Activated CD4-positive, alpha-beta memory T cell treated with anti-CD3 and anti-CD28 coated beads, Interleukin-2, amount 10 ng/mL, durations not matched to agents 7 days and 5 days (primary cell): ENCODE measurements at regions of chr10 and their contacts with region 1.

Region 1: DNA sequence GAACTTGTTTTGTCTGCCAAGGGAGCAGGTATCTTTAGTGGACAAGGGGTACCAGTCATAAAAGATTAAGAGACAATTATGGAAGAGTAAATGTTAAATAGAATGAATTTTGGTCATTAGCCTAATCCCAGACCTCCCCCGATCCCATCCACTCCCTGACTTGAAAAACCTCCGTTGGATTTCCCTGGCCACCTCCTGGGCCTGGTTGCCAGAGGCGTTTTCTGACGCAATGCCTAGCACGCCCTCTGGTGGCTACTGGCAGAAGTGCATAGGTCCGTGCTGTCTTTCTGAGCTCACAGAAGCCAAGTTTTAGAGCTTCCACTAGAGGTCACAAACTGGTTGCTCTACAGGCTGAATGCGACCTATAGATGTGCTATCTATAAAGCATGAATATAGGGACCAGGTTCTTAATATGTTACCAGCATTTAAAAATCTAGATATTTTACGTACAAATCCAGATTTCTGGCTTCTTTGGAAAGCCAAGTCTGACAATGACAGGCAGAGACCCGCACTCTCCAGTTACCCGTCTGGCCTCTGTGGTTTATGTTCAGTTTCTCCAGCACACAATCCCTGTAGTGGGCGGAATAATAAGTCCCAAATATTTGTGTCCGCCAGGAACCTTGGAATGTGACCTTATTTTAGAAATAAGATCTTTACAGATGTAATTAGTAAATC is 39.8 kb downstream of the SPOCK2 start:
- DNase-seq: peak; percentile 93
- H3K4me3 Mint-ChIP-seq: no peak overlapping the region
- H3K27ac Mint-ChIP-seq: peak overlapping the region; percentile 8
- H3K4me1 Mint-ChIP-seq: peaks cover 8% of the 10 kb centered on the region
- H3K27me3 Mint-ChIP-seq: no peaks in the 10 kb centered on the region

Region 2: GRCh38 chr10:71708301-71708703 is 340.3 kb before region 1 on chr10:
- CTCF ChIA-PET with region 1: no interaction called
- POLR2A ChIA-PET with region 1: no interaction called
- DNase-seq: peak; percentile 73
- H3K4me3 Mint-ChIP-seq: no peak overlapping the region
- H3K27ac Mint-ChIP-seq: no peak overlapping the region
- H3K4me1 Mint-ChIP-seq: peaks cover 32% of the 10 kb centered on the region
- H3K27me3 Mint-ChIP-seq: no peaks in the 10 kb centered on the region

Region 3: DNA sequence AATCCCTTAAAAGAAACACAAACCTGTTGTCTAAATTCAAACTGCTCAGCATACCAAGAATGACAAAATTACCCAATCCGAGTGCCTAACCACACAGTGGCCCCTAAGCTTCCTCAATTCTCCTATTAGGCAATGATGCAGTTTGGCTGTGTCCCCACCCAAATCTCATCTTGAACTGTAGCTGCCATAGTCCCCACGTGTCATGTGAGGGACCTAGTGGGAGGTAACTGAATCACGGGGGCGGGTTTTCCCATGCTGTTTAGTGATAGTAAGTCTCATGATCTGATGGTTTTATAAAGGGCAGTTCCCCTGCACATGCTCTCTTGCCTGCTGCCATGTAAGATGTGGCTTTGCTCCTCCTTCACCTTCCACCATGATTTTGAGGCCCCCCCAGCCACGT is 219.4 kb before region 1 on chr10:
- CTCF ChIA-PET with region 1: no interaction called
- POLR2A ChIA-PET with region 1: no interaction called
- DNase-seq: no peak
- H3K4me3 Mint-ChIP-seq: no peak overlapping the region
- H3K27ac Mint-ChIP-seq: peak overlapping the region; percentile 8
- H3K4me1 Mint-ChIP-seq: peaks cover 9% of the 10 kb centered on the region
- H3K27me3 Mint-ChIP-seq: no peaks in the 10 kb centered on the region

Region 4: DNA sequence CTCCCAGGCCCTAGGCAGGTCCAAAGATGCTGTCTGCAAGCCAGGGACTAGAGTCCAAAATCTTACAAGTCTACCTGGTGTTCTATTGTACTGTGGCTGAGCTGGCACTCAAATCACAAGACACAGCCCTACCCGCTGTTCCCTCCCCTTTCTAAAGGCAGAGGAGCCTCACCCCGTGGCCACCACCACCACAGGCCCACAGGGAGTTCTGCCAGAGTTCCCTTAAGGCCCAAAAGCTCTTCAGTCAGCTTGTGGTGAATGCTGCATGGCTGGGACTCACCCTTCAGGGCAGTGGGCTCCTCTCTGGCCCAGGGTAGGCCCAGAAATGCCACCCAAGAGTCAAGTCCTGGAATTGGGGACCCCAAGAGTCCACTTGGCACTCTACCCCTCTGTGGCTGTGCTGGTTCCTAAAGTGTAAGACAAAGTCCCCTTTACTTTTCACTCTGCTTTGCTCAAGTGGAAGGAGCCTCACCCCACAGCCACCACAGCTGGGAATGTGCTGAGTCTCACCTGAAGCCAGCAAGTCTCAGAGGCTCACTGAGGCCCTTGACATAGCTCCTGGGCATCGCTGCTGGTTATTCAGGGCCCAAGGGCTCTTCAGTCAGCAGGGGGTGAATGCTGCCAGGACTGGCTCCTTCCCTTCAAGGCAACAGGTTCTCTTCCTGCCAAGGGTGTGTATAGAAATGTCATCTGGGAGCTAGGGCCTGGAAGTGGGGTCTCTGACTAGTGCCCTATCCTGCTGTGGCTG is 148.7 kb before region 1 on chr10:
- CTCF ChIA-PET with region 1: interaction called, 30 read pairs
- POLR2A ChIA-PET with region 1: interaction called, 5 read pairs
- DNase-seq: no peak
- H3K4me3 Mint-ChIP-seq: no peak overlapping the region
- H3K27ac Mint-ChIP-seq: no peak overlapping the region
- H3K4me1 Mint-ChIP-seq: peaks cover 3% of the 10 kb centered on the region
- H3K27me3 Mint-ChIP-seq: peaks cover 2% of the 10 kb centered on the region

Region 5: GRCh38 chr10:72038458-72039001 is 10.1 kb before region 1 on chr10:
- CTCF ChIA-PET with region 1: interaction called, 25 read pairs
- POLR2A ChIA-PET with region 1: no interaction called
- DNase-seq: no peak
- H3K4me3 Mint-ChIP-seq: no peak overlapping the region
- H3K27ac Mint-ChIP-seq: no peak overlapping the region
- H3K4me1 Mint-ChIP-seq: no peaks in the 10 kb centered on the region
- H3K27me3 Mint-ChIP-seq: peaks cover 1% of the 10 kb centered on the region

Region 6: DNA sequence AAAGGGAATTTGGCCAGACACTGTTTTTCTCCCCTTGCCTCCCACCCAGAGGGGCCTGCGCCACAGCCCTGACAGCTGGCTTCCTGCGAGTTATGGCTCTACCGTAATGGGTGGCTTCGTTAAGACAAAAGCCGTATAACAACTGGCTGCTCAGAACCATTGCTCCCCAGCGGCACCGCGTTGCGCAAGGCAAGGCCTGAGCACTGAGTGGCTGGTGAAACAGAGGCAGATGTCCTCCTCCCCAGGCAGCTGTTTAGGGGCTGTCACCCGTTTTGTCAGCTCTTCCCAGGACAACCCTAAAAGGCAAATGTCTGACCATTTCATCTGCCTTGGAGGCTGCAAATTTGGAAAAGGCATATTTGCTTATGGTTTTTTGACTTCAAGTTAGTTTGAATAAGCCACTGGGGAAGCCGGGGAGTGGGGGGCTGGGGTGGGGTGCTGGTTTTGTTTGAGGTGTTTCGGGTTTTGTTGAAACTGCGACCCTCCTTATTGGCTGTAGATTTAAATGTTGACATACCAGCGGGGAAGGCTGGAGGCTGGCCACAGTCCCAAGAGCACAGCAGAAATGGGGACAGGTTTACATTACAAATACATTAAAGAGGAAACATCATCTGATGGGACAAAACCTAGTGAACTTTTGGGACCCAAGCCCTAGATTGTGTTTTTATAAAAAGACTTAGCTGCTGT is 40.4 kb after region 1 on chr10:
- CTCF ChIA-PET with region 1: interaction called, 13 read pairs
- POLR2A ChIA-PET with region 1: interaction called, 4 read pairs
- DNase-seq: peak; percentile 68
- H3K4me3 Mint-ChIP-seq: peak overlapping the region; percentile 100
- H3K27ac Mint-ChIP-seq: peak overlapping the region; percentile 100
- H3K4me1 Mint-ChIP-seq: peaks cover 54% of the 10 kb centered on the region
- H3K27me3 Mint-ChIP-seq: no peaks in the 10 kb centered on the region

Region 7: DNA sequence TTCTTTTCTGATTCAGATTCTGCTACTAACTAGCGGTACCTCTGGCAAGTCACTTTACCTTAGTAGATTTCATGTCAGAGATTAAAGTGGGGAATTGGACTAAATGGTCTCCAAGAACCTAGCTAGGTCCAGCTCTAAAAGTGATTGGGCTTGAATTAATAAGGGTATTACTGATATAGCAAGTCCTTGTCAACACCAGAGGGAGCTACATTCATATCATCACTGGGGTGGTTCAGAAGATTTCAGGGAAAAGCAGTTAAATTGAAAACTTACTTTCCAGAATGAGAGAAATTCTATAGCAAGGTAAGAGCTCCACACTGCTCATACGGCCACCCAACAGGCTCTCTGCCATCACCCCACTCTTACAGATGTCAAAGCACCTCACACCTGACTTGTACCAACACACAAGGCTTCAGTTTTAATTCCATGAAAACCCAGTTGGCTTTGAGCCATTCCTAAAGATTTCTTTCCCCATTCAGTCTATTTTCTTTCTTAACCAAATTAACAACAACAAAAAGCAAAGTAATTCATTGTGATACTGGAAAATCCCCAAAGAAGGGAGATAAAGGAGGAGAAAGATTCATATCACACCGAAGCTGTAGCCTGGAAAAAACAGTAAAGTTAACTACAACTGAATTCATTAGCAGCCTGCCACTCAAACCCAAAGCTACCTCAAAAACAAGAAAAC is 77.7 kb after region 1 on chr10:
- CTCF ChIA-PET with region 1: interaction called, 20 read pairs
- POLR2A ChIA-PET with region 1: no interaction called
- DNase-seq: no peak
- H3K4me3 Mint-ChIP-seq: no peak overlapping the region
- H3K27ac Mint-ChIP-seq: no peak overlapping the region
- H3K4me1 Mint-ChIP-seq: peaks cover 28% of the 10 kb centered on the region
- H3K27me3 Mint-ChIP-seq: no peaks in the 10 kb centered on the region

Region 8: GRCh38 chr10:72223743-72224101 is 175.1 kb after region 1 on chr10:
- CTCF ChIA-PET with region 1: interaction called, 29 read pairs
- POLR2A ChIA-PET with region 1: no interaction called
- DNase-seq: no peak
- H3K4me3 Mint-ChIP-seq: no peak overlapping the region
- H3K27ac Mint-ChIP-seq: peak overlapping the region; percentile 58
- H3K4me1 Mint-ChIP-seq: peaks cover 52% of the 10 kb centered on the region
- H3K27me3 Mint-ChIP-seq: no peaks in the 10 kb centered on the region